ENCODE measurements at regions of chr1 and their contacts with region 1.

Region 1: GRCh38 chr1:56831871-56832693 is 12.9 kb upstream of the FYB2 start:
- DNase-seq: peak; percentile 28 to 38
- ATAC-seq: peak; percentile 62 to 71
- H3K4me3 ChIP-seq: no peak overlapping the region
- H3K27ac ChIP-seq: no peak overlapping the region
- H3K4me1 ChIP-seq: no peaks in the 10 kb centered on the region
- H3K27me3 ChIP-seq: no peaks in the 10 kb centered on the region
- CTCF ChIP-seq: peak; percentile 84 to 97 (median 91)
- POLR2A ChIP-seq: no peak

Region 2: DNA sequence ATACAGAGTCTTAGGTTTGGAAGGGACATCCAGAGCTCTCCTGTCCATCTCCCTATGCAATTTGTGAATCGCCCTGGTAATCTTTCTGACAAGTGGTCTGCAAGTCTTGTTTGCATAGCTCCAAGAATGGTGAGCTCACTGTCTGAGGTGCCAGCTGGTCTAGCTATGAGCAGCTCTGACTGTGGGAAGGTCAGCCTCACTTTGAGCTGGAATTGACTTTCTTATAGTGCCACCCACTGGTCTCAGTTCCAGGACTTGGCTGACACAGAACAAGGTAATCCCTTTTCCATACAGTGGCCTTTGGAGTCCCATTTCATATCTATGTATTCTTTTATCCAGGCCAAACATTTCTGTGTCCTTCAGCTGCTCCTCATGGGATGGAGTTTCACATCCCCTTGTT is 229.3 kb after region 1 on chr1:
- in situ Hi-C with region 1: loop called in 3 of 4 experiments (anchors 5 to 25 kb)
- intact Hi-C with region 1: loop called (anchors 1 kb)
- DNase-seq: no peak
- ATAC-seq: no peak
- H3K4me3 ChIP-seq: no peak overlapping the region
- H3K27ac ChIP-seq: no peak overlapping the region
- H3K4me1 ChIP-seq: peaks cover 17 to 27% of the 10 kb centered on the region in 2 donors
- H3K27me3 ChIP-seq: no peaks in the 10 kb centered on the region
- CTCF ChIP-seq: no peak
- POLR2A ChIP-seq: no peak

Region 3: DNA sequence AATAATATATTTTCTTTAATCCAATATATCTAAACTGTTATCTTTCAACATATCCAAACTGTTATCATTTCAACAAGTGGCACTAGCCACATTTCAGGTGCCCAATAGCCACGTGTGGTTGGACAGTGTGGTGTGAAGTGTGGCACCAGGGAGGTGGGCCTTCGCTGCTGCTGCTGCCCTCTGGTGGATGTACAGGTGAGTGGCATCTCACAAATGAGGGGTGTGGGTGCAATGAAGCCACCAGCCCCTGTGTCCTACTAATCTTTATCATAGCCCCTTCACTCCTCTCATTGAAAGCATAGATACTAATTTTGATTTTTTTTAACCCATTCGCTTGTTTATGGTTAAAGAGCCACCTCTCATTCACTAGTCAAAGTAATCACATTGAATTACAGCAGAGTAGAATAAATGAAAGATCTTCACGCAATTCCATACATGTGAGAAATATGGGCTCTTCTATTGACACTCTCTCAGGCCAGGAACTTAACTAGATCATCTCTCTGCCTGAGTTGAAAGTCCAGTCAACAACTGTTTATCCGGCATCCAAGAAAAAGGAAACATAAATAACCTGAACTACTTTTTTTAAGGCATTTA is 1215.3 kb after region 1 on chr1:
- in situ Hi-C with region 1: loop called (anchors 25 kb)
- intact Hi-C with region 1: loop called (anchors 1 kb)
- DNase-seq: no peak
- ATAC-seq: no peak
- H3K4me3 ChIP-seq: no peak overlapping the region
- H3K27ac ChIP-seq: no peak overlapping the region
- H3K4me1 ChIP-seq: no peaks in the 10 kb centered on the region
- H3K27me3 ChIP-seq: no peaks in the 10 kb centered on the region
- CTCF ChIP-seq: peak; percentile 23 to 58 (median 40)
- POLR2A ChIP-seq: no peak

Region 4: DNA sequence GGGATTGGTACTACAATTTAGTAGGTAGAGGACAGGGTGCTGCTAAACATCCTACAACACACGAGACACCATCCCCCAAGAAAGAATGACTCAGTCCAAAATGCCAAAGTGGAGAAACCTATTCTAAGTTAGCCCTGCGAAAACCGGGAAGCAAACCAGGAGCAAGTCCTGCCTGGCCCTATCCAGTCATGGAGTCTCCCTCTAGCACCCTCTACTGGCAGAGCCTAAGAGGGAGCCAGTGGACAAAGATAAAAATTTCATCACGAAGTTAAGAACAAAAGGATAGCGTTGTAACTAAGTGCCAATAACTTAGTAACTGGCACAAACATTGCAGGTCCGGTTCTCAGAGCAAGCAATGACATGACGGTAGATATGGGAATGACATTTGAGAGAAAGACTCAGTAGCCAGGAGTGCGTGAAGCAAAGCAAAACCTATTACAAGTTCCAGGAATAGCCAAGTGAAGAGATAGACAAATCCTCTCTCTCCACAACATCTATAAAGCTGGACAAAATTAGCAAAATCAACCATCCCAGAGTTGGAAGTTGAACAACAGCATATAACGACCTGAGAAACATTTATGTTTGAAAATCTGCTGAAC is 1331.0 kb after region 1 on chr1:
- in situ Hi-C with region 1: loop called in 2 of 4 experiments (anchors 25 kb)
- intact Hi-C with region 1: loop called (anchors 5 kb)
- DNase-seq: peak; percentile 10 to 32
- ATAC-seq: peak; percentile 80 to 91
- H3K4me3 ChIP-seq: no peak overlapping the region
- H3K27ac ChIP-seq: no peak overlapping the region
- H3K4me1 ChIP-seq: peaks cover 0 to 4% of the 10 kb centered on the region in 2 donors
- H3K27me3 ChIP-seq: no peaks in the 10 kb centered on the region
- CTCF ChIP-seq: peak; percentile 34 to 83 (median 51)
- POLR2A ChIP-seq: no peak

Measured in gastrocnemius medialis (tissue), 4 donors.